Right ventricle myocardium superior (tissue), 1 donor: ENCODE measurements at regions of chr16 and their contacts with region 1.

Region 1: DNA sequence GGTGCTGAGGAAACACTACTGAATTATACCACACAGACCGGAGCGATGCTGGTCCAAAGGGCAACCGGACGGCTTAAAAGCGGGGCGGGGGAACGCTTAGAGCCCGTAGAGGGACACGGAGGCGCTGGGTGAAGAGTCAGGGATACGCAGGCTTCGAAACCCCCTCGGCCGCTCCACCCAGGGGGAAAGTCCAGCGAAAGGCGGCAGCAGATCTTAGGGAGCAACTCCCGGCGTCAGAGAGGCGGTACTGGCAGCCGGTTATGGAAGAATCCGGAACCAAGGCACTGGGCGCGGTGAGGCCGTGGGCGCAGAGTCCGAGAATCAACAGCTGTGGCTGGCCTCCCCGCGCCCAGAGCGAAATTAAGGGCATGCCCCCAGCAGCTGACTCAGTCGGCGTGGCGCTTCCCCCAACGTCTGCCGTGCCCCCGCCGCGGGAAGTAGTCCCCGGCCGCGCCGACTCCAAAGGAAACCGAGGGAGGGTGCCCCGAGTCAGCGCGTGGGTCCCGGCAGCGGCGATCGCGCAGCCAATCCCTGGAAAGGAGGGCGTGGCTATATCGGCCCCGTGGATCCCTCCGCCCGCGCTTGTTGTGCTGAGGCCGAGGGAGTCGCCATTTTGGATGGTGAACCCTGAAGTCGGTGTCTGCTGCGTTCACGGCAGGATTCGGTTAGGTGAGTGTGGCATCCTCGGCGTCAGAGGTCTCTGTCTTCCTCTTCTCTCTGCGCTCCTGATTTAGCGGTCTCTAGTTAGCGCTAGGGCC is at the start of gene IST1:
- DNase-seq: peak; percentile 99
- ATAC-seq: peak; percentile 98
- total RNA-seq, gene IST1: 113 TPM

Region 2: DNA sequence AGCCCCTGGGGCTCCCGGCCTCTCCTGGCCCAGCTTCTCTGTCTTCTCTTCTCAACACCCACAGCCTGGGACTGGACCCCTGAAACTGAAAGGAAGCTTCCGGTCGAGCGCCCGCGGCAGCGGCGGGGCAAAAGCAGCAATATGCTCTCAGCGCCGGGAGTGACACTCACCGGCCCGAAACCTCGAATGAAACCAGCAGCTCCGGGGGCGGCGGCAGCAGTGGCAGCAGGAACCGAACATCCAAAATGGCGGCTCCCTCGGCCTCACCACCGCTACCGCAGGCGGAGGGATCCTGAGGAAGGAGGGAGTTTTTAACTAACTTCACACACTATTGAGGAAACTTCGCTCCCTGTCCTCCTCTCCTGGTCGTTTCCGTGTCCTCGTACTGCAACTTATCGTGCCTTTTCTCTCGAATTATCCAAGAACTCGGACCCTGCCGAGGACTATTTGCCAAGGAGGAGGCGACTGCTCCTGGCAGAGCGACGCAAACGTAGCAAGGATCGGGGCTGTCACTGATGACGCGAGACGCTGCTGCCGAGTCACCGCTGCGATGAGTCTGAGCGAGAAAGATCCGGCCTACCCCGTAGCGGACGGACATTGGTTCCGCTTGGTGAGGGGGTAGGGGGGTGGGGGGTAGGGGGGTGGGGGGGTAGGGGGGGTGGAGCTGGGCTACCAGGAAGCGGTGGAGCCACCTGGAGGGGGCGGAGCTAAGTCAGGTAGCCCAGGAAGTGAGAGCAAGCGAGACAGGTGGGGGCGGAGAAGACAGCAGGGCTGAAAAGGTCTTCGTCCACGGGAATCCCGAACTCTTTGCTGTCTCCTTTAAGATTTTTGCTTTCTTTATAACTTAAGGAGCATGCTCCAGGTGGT is 86.3 kb before region 1 on chr16 and contains the start of gene AP1G1:
- intact Hi-C with region 1: loop called (anchors 1 kb)
- DNase-seq: peak; percentile 97
- ATAC-seq: peak; percentile 99
- total RNA-seq, gene AP1G1: 27.2 TPM

Region 3: GRCh38 chr16:72256398-72257054 is 361.4 kb after region 1 on chr16:
- intact Hi-C with region 1: no loop called
- DNase-seq: no peak
- ATAC-seq: no peak